ENCODE measurements at regions of chr3 and their contacts with region 1.

Region 1: GRCh38 chr3:46488735-46489361 is 8.9 kb upstream of the RTP3 start:
- DNase-seq: peak; percentile 84
- H3K4me3 ChIP-seq: no peak overlapping the region
- H3K27ac ChIP-seq: no peak overlapping the region
- H3K4me1 ChIP-seq: peaks cover 2% of the 10 kb centered on the region
- H3K27me3 ChIP-seq: peaks cover 2 to 7% of the 10 kb centered on the region in 2 experiments
- CTCF ChIP-seq: peak; percentile 99 to 100
- POLR2A ChIP-seq: no peak

Region 2: DNA sequence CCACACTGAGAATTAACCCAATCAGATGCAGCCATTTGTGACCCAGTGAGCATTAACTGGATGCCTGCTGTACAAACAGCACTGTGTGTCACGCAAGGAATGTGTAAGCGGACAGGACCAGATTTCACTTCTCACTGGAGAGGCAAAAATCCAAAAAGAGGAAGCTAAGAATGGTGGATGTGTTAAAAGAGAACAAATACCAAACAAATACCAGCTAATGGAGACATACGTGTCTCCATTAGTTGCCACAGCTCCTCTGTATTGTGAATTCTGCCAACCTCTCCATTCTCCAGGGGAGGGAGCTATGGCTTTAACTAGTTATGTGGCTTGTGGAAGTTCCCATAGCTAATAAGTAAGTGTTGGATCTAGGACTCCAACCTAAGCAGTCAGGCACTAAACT is 26.7 kb before region 1 on chr3:
- CTCF ChIA-PET with region 1: interaction called, 28 read pairs
- POLR2A ChIA-PET with region 1: interaction called, 3 read pairs
- dilution Hi-C with region 1: no loop called
- intact Hi-C with region 1: no loop called
- DNase-seq: no peak
- H3K4me3 ChIP-seq: no peak overlapping the region
- H3K27ac ChIP-seq: no peak overlapping the region
- H3K4me1 ChIP-seq: no peaks in the 10 kb centered on the region
- H3K27me3 ChIP-seq: no peaks in the 10 kb centered on the region
- CTCF ChIP-seq: no peak
- POLR2A ChIP-seq: no peak

Region 3: DNA sequence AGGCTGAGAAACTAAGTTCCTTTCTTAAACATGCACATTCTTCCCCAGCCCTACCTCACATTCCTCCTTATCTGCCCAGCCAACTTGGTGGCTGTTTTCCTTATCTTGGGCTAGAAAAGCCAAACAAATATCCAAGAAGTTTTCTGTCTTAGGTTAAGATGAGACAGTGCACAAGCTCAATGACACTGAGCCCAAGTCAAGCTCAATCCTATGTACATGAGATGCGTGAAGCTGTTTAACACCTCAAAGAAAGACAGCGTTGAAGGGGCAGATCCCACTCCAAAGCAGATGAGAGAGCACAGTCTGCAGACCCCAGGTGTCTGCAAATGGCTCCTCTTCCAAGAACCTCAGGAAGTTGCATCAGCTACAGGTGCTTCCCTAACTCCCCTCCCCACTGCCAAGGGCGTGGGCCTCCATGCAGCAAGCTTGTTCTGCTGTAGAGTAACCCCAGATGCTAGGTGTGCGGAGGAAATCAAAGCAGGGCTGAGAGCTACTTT is 60.6 kb after region 1 on chr3:
- CTCF ChIA-PET with region 1: interaction called, 17 read pairs
- POLR2A ChIA-PET with region 1: no interaction called
- dilution Hi-C with region 1: no loop called
- intact Hi-C with region 1: no loop called
- DNase-seq: no peak
- H3K4me3 ChIP-seq: no peak overlapping the region
- H3K27ac ChIP-seq: no peak overlapping the region
- H3K4me1 ChIP-seq: no peaks in the 10 kb centered on the region
- H3K27me3 ChIP-seq: peaks cover 0 to 6% of the 10 kb centered on the region in 2 experiments
- CTCF ChIP-seq: no peak
- POLR2A ChIP-seq: no peak

Region 4: DNA sequence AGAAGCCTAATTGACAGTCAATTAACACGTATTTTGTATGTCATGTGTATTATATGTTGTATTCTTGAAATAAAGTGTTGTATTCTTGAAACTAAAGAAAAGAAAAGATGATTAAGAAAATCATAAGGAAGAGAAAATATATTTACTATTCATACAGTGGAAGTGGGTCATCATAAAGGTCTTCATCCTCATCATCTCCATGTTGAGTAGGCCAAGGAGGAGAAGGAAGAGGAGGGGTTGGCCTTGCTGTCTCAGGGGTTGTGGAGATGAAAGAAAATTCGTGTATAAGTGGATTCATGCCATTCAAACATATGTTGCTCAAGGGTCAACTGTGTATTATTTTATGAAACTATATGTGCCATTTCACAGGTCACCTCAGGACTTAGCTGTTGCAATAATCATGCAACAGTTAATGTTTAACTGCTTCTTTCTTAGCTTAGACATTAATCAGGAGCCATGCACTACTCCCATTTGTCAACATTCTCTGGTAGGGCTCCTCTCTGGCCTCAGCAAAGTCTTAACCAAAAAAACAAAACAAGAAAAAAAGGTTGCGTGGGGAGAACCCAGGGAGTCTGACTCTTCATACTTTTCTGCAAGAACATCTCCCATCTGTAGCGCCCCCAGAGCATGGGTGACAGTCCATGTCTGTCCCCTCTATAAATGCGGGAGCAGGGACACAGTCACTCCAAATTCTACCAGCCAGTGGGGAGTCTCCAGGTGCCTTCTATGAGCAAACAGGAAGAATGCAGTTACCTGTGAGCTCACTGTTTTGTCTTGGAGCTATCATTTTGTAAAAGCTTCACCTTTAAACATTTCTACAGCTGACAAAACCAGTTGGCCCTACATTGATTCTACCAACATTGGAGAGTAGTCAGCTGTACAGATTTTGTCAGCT is 97.2 kb after region 1 on chr3:
- CTCF ChIA-PET with region 1: interaction called, 10 read pairs
- POLR2A ChIA-PET with region 1: no interaction called
- dilution Hi-C with region 1: no loop called
- intact Hi-C with region 1: no loop called
- DNase-seq: no peak
- H3K4me3 ChIP-seq: no peak overlapping the region
- H3K27ac ChIP-seq: no peak overlapping the region
- H3K4me1 ChIP-seq: no peaks in the 10 kb centered on the region
- H3K27me3 ChIP-seq: no peaks in the 10 kb centered on the region
- CTCF ChIP-seq: no peak
- POLR2A ChIP-seq: no peak

Region 5: DNA sequence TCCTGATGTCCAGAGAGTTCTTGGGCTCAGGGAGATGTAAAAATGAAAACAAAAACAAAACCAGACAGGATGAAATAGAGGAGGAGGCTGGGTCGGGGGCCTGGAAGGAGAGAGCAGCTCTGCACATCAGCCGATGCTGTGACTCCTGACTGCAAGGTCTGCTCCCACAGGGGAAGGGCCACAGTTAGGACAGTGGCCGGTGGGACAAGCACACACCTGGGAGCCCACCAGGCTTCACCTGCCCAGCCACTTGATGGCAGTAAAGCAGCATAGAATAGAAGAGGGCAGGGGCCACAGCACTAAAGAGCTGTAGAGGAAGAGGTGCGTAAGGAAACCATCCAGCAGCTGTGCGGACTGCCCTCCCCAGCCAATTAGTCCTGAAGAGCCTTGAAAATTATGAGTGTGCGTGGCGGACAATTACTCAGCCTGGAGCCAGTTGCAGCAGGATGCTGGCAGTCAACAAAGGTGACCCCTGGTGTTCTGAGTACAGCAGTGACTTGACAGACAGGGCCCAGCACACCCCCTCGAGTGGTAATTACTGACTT is 174.8 kb after region 1 on chr3:
- CTCF ChIA-PET with region 1: interaction called, 14 read pairs
- POLR2A ChIA-PET with region 1: no interaction called
- dilution Hi-C with region 1: no loop called
- intact Hi-C with region 1: no loop called
- DNase-seq: peak; percentile 46
- H3K4me3 ChIP-seq: no peak overlapping the region
- H3K27ac ChIP-seq: no peak overlapping the region
- H3K4me1 ChIP-seq: no peaks in the 10 kb centered on the region
- H3K27me3 ChIP-seq: no peaks in the 10 kb centered on the region
- CTCF ChIP-seq: peak; percentile 12 to 16
- POLR2A ChIP-seq: no peak